Left ventricle myocardium superior (tissue), 1 donor: ENCODE measurements at regions of chr1 and their contacts with region 1.

Region 1: DNA sequence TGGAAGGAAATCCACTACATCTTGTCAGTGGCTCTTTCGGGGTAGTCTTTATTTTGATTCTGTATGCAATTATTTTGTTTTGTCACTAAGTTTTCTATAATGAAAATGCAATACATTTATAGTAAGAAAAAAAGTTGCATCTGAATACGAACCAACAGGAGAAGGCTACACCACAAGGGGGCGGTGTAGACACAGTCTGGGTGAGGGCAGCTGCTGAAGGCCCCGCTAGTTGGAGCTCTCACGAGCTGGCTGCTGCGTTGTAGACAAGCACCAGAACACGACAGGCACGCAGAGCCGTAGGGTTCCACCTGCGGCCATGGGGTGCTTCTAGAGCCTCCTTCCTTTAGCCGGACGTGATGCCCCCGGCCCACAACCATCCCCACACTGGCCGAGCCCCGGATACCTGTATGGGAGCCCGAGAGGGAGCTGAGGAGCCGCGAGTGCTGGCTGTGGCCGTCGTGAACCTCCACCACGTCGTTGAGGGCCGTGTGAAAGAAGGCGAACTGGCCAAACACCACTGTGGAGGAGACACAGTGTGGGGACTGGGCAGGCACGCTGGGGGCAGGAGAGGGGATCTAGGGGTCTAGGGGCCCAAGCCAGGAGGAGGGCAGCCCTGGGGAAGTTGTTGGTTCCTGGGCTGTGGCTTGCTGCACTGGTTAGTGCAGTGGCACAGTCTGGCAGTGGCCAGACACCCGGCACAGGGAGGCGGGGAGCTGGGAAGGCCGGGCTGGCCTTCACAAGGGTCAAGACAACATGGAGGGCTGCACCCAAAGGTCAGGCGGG is 160.8 kb downstream of the ZSCAN20 start:
- DNase-seq: peak; percentile 91
- ATAC-seq: peak; percentile 88

Region 2: GRCh38 chr1:33784876-33785275 is 151.7 kb after region 1 on chr1:
- intact Hi-C with region 1: no loop called
- DNase-seq: no peak
- ATAC-seq: no peak

Region 3: GRCh38 chr1:34125721-34126380 is 492.6 kb after region 1 on chr1:
- intact Hi-C with region 1: no loop called
- DNase-seq: no peak
- ATAC-seq: no peak

Region 4: DNA sequence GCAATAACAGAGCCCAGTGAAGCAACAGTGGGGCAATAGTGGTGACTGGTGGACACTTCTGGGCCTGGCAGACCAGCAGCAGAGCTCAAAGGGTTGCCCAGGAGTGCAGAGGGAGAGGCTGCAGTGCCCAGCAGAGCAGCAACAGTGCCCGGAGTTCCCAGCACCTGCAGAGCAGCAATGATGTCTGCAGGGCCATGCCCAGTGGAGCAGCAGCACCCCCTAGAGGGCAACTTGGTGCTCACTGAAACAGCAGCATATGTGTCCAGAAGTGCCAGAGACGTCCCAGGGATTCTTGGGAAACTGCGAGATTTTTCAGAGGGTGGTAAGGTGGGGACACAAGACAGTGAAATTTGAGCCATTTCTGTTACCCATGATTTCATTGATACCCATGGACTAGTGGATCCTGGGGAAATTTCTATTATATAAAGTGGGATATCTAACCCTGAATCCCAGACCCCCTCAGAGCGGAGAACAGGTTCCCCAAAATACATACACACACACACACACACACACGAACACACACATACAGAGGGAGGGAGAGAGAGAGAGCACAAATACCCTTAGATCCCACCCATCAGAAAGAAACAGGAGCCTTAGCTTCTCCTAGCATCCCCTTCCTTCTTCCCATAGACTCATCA is 964.8 kb after region 1 on chr1:
- intact Hi-C with region 1: loop called (anchors 10 kb)
- DNase-seq: peak; percentile 66
- ATAC-seq: peak; percentile 68